Adrenal gland (tissue), 19 donors: ENCODE measurements at regions of chrX and their contacts with region 1.

Region 1: DNA sequence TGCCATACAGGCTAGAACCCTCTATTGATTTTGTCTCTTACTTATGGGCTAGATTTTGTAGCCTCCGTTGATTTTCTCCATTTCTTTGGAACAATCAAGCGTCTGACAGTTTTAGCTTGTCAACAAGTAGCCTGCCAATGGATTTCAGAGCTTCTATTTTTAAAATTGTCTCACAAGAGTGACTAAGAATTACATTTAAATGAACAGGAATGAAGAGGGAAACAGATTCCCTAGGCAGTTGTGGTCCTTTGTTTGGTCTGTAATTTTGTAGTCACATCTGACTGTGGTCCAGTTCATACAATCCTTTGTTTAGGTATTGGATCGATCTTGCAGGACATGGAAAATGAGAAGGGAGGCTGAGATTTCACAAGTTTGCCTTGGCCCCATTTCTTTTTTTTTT is 86.7 kb upstream of the EGFL6 start:
- DNase-seq: no peak
- H3K4me3 ChIP-seq: no peak overlapping the region
- H3K27ac ChIP-seq: no peak overlapping the region
- H3K4me1 ChIP-seq: peaks cover 0 to 9% of the 10 kb centered on the region in 2 donors
- H3K27me3 ChIP-seq: peaks cover 15% of the 10 kb centered on the region
- CTCF ChIP-seq: no peak
- POLR2A ChIP-seq: no peak

Region 2: DNA sequence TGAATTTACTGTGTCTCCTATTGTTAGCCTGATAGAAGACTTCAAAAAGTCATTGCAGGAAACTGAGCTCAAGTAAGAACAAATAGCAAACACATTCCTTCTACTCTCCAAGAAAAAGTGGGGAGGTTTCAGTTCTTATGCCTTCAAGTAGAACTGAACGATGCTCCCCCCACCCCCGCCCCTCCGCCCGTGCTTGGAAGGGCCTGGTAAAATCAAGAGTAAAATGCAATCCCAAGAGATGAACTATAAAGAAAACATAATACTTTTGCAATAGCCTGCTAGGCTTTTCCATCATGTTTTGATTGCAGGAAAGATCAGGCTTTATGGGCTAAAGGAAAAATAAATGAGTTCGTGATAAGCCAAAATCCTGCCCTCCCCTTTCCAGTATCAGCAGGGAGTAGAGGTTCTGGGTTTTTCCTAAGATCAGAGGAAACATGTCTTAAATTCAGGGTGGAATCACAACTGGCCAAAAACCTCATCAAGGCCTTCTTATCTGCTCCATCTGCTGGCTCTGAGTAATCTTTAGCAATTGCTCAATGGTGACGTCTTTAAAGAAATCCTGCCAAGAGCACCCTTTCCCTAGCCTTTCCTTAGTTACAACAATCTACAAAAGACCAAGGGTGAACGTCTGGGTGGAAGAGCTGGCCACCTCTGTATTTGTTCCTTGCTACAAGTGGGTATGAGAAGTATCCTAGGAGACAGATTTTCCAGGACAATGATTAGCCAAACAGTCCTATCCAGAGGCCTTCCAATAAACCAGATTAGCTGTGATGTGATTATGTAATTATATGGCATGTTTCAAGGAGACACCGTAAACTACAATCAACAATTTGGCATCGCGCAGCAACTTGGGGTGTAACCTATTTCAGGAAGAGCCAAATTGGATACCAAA is 372.1 kb before region 1 on chrX:
- intact Hi-C with region 1: loop called in 1 of 2 experiments (anchors 5 kb)
- DNase-seq: peak; percentile 40 to 78 (median 67)
- H3K4me3 ChIP-seq: no peak overlapping the region
- H3K27ac ChIP-seq: peak overlapping the region; percentile 24 to 86 (median 73)
- H3K4me1 ChIP-seq: peaks cover 6 to 10% of the 10 kb centered on the region in 2 donors
- H3K27me3 ChIP-seq: no peaks in the 10 kb centered on the region
- CTCF ChIP-seq: no peak
- POLR2A ChIP-seq: no peak

Region 3: DNA sequence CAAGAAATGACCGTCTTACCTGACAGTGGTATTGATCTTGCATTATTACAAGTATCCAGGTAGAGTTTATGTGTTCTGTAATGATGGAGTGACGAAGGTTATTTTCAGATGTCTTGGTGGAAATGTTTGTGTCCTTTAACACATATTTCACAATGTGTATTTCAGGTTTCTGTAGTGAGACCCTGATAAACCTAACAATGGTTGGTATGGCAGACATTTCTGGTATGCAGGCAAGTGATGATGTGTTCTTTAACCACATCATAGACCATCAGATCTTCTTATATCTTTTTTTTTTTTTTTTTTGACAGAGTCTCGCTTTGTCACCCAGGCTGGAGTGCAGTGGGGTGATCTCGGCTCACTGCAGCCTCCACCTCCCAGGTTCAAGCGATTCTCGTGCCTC is 148.3 kb before region 1 on chrX:
- intact Hi-C with region 1: no loop called
- DNase-seq: no peak
- H3K4me3 ChIP-seq: no peak overlapping the region
- H3K27ac ChIP-seq: no peak overlapping the region
- H3K4me1 ChIP-seq: no peaks in the 10 kb centered on the region
- H3K27me3 ChIP-seq: peaks cover 8% of the 10 kb centered on the region
- CTCF ChIP-seq: no peak
- POLR2A ChIP-seq: no peak